Activated B cell treated with CpG ODN at 0.5 μM for 24 hours (primary cell): ENCODE measurements at regions of chr3 and their contacts with region 1.

Region 1: GRCh38 chr3:105222568-105223093 is 144.1 kb upstream of the ALCAM start:
- DNase-seq: no peak
- ATAC-seq: no peak
- H3K4me3 Mint-ChIP-seq: no peak overlapping the region
- H3K27ac Mint-ChIP-seq: no peak overlapping the region
- H3K4me1 Mint-ChIP-seq: no peaks in the 10 kb centered on the region
- H3K27me3 Mint-ChIP-seq: no peaks in the 10 kb centered on the region
- CTCF ChIP-seq: no peak

Region 2: GRCh38 chr3:104805042-104805441 is 417.6 kb before region 1 on chr3:
- CTCF ChIA-PET with region 1: no interaction called
- POLR2A ChIA-PET with region 1: no interaction called
- intact Hi-C with region 1: loop called (anchors 10 kb)
- DNase-seq: no peak
- ATAC-seq: no peak
- H3K4me3 Mint-ChIP-seq: no peak overlapping the region
- H3K27ac Mint-ChIP-seq: no peak overlapping the region
- H3K4me1 Mint-ChIP-seq: no peaks in the 10 kb centered on the region
- H3K27me3 Mint-ChIP-seq: peaks cover 5% of the 10 kb centered on the region
- CTCF ChIP-seq: no peak

Region 3: GRCh38 chr3:106049821-106050220 is 827.2 kb after region 1 on chr3:
- CTCF ChIA-PET with region 1: no interaction called
- POLR2A ChIA-PET with region 1: no interaction called
- intact Hi-C with region 1: no loop called
- DNase-seq: no peak
- ATAC-seq: no peak
- H3K4me3 Mint-ChIP-seq: no peak overlapping the region
- H3K27ac Mint-ChIP-seq: no peak overlapping the region
- H3K4me1 Mint-ChIP-seq: no peaks in the 10 kb centered on the region
- H3K27me3 Mint-ChIP-seq: no peaks in the 10 kb centered on the region
- CTCF ChIP-seq: no peak